ENCODE measurements at regions of chr1 and their contacts with region 1.

Region 1: DNA sequence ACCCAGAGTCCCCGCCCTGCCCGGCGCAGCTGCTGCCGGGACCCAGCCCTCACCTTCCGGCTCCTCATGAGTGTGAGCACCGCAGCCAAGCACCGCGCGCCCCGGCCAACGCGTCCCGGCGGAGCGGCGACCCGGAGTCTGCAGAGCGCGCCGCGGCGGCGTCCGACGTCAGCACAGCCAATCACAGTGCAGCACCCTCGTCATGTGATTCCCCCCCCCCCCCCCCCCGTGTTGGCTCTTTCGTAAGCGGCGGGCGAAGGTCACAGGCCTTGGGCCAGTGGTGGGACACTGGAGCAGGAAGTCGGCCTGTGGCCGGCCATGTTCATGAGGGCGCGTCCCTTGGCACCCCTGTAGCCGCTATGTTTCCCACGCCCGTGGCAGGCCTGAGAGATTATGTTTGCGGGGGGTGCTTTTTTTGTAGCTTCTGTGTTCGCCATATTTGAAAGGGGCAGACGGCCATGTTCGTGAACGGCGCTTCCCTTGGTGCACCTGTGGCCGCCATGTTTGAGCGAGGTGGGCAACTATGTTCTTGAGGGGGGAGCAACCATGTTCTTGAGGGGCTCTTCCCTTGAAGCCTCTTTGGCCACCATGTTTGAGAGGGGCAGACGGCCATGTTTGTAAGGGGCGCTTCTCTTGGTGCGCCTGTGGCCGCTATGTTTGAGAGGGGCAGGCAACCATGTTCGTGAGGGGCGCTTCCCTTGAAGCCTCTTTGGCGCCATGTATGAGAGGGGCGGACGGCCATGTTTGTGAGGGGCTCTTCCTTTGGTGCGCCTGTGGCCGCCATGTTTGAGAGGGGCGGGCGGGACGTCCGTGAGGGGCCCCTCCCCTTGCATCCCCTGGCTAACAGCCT is at the start of gene C1orf174:
- DNase-seq: peak; percentile 99
- H3K4me3 ChIP-seq: peak within 1 kb of the TSS; percentile 83 to 98 (median 96)
- H3K27ac ChIP-seq: peak within 1 kb of the TSS; percentile 95 to 100 (median 99)
- H3K4me1 ChIP-seq: peaks cover 0 to 24% (median 19%) of the 10 kb centered on the region in 4 donors
- H3K27me3 ChIP-seq: no peaks in the 10 kb centered on the region
- CTCF ChIP-seq: no peak
- EP300 ChIP-seq: no peak
- POLR2A ChIP-seq: peak in 1 of 2 donors; percentile 35
- total RNA-seq, gene C1orf174: 23.4 to 33.0 (median 24.5) TPM

Region 2: DNA sequence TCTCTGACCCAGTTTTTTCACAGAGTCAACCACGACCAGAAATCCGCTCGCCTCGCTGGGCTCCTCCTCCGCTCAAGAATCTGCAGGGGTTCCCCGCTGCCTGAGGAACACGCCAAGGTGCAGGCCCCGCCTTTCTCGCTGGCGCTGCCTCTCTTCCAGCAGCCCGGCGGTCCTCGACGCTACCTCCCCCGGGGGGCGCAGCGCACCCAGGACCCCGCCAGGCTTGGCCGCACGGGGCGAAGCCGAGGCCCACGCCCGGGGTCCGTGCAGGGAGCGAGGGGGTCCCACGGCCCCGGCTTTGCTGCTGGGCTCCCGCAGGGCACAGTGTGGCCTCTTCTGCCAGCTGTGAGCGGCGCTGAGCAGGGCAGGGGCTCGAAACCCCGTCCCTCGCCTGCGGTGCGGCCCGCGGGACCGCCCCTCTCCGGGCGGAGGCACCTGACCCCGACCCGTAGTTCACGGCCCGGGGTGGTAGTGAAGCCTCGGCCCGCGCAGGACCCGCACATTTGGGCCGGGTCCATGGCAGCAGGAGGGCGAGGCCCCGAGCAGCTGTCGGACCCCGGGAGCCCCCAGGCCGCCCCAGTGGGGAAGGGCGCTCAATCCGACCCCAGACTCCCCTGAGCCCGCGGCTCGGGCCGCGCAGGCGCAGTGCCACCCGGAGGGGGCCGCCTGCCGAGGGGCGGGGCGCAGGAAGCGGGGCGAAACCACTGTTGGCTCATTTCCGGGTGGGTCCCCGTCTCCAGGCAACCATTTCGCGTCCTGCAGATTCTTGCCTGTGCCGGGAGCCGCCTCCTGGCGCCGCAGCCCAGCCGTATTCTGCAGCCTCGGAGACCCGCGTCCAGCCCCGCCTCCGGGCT is 1257.6 kb before region 1 on chr1:
- intact Hi-C with region 1: loop called (anchors 10 kb)
- DNase-seq: peak; percentile 96
- H3K4me3 ChIP-seq: peak overlapping the region; percentile 67 to 95 (median 88)
- H3K27ac ChIP-seq: peak overlapping the region; percentile 81 to 84 (median 82)
- H3K4me1 ChIP-seq: peaks cover 0 to 26% (median 21%) of the 10 kb centered on the region in 4 donors
- H3K27me3 ChIP-seq: peaks cover 0 to 2% (median 0%) of the 10 kb centered on the region in 3 donors
- CTCF ChIP-seq: no peak
- EP300 ChIP-seq: no peak
- POLR2A ChIP-seq: peak; percentile 63 to 67

Region 3: DNA sequence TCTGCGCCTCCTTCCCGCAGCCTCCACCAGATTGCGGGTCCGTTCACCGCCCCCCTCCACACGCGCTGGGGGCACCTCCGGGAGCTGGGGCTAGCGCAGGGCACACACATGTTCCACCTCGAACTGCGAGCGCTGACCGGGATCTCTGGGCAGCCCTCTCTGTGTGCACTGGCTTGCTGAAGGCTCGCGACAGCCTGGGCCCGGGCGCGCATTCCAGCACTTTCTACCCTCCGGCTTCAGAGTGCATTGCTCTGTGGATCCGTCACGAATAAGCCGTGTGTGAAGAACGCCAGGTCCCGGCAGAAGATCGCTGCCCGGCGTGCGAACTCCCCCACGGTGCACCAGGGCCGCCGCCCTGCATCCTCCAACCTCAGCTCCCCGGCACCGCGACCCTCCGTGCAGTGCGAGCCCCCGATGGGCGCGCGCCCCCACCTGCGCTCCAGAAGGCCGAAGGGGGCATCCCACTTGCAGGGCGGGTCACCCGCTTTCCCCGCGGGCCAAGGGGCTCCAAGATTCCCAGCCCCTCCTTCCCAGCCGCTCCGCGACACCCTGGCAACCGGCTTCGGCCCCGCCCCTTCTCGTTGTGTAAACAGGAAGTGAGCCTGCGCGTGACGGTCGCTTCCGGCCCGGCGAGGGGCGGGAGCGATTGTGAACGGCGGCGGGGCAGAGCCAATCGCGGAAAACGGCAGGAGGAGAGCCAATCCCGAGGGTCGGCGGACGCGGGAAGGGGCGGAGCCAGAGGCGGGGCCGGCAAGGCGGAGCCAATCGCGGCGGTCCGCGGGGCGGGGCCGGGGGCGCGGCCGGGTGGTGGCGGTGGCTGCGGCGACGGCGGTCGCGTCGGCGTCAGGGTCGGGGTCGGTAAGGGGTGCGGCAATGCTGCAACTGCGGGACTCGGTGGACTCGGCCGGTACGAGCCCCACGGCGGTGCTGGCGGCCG is 275.9 kb before region 1 on chr1 and contains the start of gene TPRG1L:
- intact Hi-C with region 1: loop called (anchors 10 kb)
- DNase-seq: peak; percentile 99
- H3K4me3 ChIP-seq: peak within 1 kb of the TSS; percentile 84 to 99 (median 98)
- H3K27ac ChIP-seq: peak within 1 kb of the TSS; percentile 82 to 92 (median 90)
- H3K4me1 ChIP-seq: peaks cover 0 to 31% (median 28%) of the 10 kb centered on the region in 4 donors
- H3K27me3 ChIP-seq: no peaks in the 10 kb centered on the region
- CTCF ChIP-seq: no peak
- EP300 ChIP-seq: peak in 1 of 4 donors; percentile 20
- POLR2A ChIP-seq: no peak
- total RNA-seq, gene TPRG1L: 34.9 to 51.8 (median 43.2) TPM

Region 4: DNA sequence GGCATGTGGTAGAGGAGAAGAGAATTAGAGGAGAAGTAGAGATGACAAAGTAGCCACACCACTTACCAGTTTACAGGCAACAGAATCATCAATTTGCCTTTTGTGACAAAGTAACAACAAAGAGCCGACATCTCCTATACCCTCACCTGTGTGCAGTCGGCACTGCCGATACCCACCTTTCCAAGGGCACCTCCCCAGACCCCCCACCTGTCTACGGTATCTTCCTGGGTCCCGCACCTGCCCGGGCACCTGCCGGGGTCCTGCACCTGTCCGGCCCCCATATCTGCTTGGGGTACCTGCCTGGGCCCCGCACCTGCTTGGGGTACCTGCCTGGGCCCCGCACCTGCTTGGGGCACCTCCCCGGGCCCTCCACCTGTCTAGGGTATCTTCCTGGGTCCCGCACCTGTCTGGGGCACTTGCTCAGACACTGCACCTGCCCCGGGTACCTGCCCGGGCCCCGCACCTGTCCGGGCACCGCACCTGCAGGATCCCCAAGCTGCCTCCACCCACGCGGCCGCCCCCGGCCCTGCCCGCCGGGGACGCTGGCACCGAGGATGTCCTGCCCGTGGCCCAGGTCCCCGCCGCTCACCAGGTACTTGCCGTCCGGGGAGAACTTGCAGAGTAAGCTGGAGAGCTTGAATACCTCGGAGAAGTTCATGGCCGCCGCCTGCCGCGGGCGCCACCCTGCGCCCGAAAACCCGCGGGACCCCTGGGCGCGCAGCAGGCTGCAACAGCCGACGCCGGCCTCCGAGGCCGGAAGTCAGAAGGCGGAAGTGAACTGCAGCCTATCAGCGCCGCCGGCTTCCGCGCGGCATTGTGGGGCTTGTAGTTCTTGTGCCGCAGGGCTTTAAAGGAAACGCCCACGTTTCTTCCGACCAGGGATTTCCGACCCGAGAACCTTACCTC is 250.7 kb before region 1 on chr1 and contains the start of gene WRAP73:
- intact Hi-C with region 1: loop called (anchors 2 kb)
- DNase-seq: peak; percentile 93
- H3K4me3 ChIP-seq: peak within 1 kb of the TSS; percentile 73 to 92 (median 80)
- H3K27ac ChIP-seq: peak within 1 kb of the TSS in 3 of 4 donors; percentile 38 to 50 (median 42)
- H3K4me1 ChIP-seq: peaks cover 0 to 39% (median 38%) of the 10 kb centered on the region in 4 donors
- H3K27me3 ChIP-seq: peaks cover 29 to 43% (median 43%) of the 10 kb centered on the region in 3 donors
- CTCF ChIP-seq: no peak
- EP300 ChIP-seq: no peak
- POLR2A ChIP-seq: peak; percentile 75 to 83
- total RNA-seq, gene WRAP73: 11.4 to 17.2 (median 14.8) TPM

Region 5: DNA sequence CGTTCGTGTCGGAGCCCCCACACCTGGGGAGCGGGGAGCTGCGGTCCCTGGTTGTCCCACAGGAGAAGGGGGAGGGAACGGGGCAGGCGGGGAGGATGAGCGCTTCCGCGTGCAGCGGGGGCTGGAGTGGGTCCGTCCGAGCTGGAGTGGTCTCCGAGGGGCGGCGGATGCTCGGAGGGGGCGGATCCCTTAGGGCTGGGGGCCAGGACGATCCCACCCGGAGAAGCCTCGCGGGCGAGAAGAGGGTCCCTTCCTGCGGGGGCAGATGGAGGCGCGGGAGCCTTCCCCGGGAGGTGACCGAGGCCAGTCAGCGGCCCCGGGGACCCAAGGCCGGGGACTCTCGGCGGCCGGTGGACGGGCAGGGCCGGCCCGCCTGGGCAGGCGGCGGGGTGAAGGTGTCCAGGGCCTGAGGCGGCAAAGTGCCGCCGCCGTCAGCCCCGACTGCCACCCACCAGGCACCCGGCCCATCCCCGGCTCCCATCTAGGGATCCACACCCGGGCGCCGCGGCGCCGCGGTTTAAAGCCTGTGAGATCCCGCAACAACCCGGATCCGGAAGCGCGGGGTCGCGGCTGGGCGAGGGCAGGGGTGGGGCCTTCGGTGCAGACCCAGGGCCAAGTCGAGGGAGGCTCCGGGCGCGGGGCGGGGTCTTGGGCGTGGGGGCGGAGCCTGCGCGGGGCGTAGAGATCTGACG is 153.4 kb before region 1 on chr1:
- intact Hi-C with region 1: loop called (anchors 5 kb)
- DNase-seq: peak; percentile 93
- H3K4me3 ChIP-seq: peak overlapping the region; percentile 57 to 91 (median 74)
- H3K27ac ChIP-seq: peak overlapping the region; percentile 74 to 87 (median 79)
- H3K4me1 ChIP-seq: peaks cover 0 to 34% (median 24%) of the 10 kb centered on the region in 4 donors
- H3K27me3 ChIP-seq: peaks cover 0 to 1% (median 0%) of the 10 kb centered on the region in 3 donors
- CTCF ChIP-seq: no peak
- EP300 ChIP-seq: no peak
- POLR2A ChIP-seq: peak in 1 of 2 donors; percentile 51

Region 6: GRCh38 chr1:3796215-3797061 is 103.9 kb before region 1 on chr1 and contains the start of gene LRRC47:
- intact Hi-C with region 1: loop called (anchors 5 kb)
- DNase-seq: peak; percentile 97
- H3K4me3 ChIP-seq: peak within 1 kb of the TSS; percentile 75 to 97 (median 88)
- H3K27ac ChIP-seq: peak within 1 kb of the TSS; percentile 70 to 85 (median 78)
- H3K4me1 ChIP-seq: peaks cover 0 to 39% (median 36%) of the 10 kb centered on the region in 4 donors
- H3K27me3 ChIP-seq: no peaks in the 10 kb centered on the region
- CTCF ChIP-seq: no peak
- EP300 ChIP-seq: peak in 1 of 4 donors; percentile 29
- POLR2A ChIP-seq: peak; percentile 35 to 57
- total RNA-seq, gene LRRC47: 26.7 to 36.4 (median 31.2) TPM

Region 7: GRCh38 chr1:3856908-3857790 is 43.2 kb before region 1 on chr1 and contains the starts of genes CEP104 and DFFB:
- intact Hi-C with region 1: loop called (anchors 2 kb)
- DNase-seq: peak; percentile 90
- H3K4me3 ChIP-seq: peak within 1 kb of the TSS; percentile 68 to 91 (median 84)
- H3K27ac ChIP-seq: peak within 1 kb of the TSS; percentile 78 to 85 (median 82)
- H3K4me1 ChIP-seq: peaks cover 5 to 33% (median 26%) of the 10 kb centered on the region in 4 donors
- H3K27me3 ChIP-seq: no peaks in the 10 kb centered on the region
- CTCF ChIP-seq: no peak
- EP300 ChIP-seq: no peak
- POLR2A ChIP-seq: no peak
- total RNA-seq, gene CEP104: 21.6 to 32.5 (median 25.3) TPM
- total RNA-seq, gene DFFB: 2.9 to 7.4 (median 6.6) TPM

Measured in sigmoid colon (tissue), 7 donors.